H1 (cell line): ENCODE measurements at regions of chr15 and their contacts with region 1.

Region 1: GRCh38 chr15:79130535-79131130 is 40.1 kb upstream of the RASGRF1 start:
- DNase-seq: no peak
- H3K4me3 ChIP-seq: no peak overlapping the region
- H3K27ac ChIP-seq: no peak overlapping the region
- H3K4me1 ChIP-seq: peaks cover 0 to 5% (median 2%) of the 10 kb centered on the region in 4 experiments; a peak in 4 of 7 replicates
- H3K27me3 ChIP-seq: no peaks in the 10 kb centered on the region
- CTCF ChIP-seq: peak; percentile 2 to 68 (median 64)
- EP300 ChIP-seq: no peak
- POLR2A ChIP-seq: no peak
- RAD21 ChIP-seq: peak; percentile 42 to 63

Region 2: GRCh38 chr15:79101866-79102578 is 28.6 kb before region 1 on chr15:
- CTCF ChIA-PET with region 1: interaction called, 20 read pairs
- POLR2A ChIA-PET with region 1: no interaction called
- DNase-seq: peak in 1 of 2 experiments; percentile 11
- H3K4me3 ChIP-seq: no peak overlapping the region
- H3K27ac ChIP-seq: no peak overlapping the region
- H3K4me1 ChIP-seq: no peaks in the 10 kb centered on the region
- H3K27me3 ChIP-seq: peaks cover 0 to 9% (median 4%) of the 10 kb centered on the region in 4 experiments; a peak in 4 of 7 replicates
- CTCF ChIP-seq: no peak; a peak in 1 of 4 replicates
- EP300 ChIP-seq: no peak
- POLR2A ChIP-seq: no peak
- RAD21 ChIP-seq: peak in 1 of 2 experiments; percentile 27; a peak in 1 of 4 replicates

Region 3: DNA sequence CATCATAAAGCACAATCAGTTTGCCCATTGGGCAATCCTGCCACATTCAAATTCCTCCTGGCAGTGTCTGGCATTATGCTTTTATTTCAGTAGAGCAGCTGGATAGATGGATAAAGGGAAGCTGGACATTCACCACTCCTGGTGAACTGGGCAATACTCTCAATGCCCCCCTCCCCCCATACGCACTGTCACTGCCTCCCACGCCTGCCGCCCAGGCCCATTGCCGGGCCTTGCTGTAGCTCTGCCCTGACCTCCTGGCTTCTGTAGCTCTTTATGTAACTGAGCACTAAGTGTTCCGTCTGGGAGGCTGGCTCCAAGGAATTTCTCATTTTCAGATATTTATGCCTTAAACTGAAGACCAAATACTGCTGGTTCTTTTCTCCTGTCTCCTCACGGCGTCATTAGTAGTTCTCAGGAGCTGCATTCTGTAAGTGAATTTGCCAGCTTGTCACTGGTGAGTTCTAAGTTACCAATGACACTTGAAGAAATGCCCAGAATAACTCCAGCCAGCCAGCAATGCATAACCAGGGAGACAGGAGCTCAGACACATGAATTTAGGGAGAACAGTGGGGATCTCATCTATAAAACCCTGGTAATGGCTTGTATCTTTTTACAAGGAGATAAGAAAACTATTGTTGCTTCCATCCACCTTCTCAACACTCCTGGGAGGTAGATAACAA is 14.5 kb before region 1 on chr15:
- CTCF ChIA-PET with region 1: interaction called, 25 read pairs
- POLR2A ChIA-PET with region 1: interaction called, 3 read pairs
- DNase-seq: peak in 1 of 2 experiments; percentile 17
- H3K4me3 ChIP-seq: no peak overlapping the region
- H3K27ac ChIP-seq: no peak overlapping the region
- H3K4me1 ChIP-seq: no peaks in the 10 kb centered on the region
- H3K27me3 ChIP-seq: no peaks in the 10 kb centered on the region; a peak in 1 of 7 replicates
- CTCF ChIP-seq: no peak
- EP300 ChIP-seq: no peak
- POLR2A ChIP-seq: no peak
- RAD21 ChIP-seq: no peak

Region 4: DNA sequence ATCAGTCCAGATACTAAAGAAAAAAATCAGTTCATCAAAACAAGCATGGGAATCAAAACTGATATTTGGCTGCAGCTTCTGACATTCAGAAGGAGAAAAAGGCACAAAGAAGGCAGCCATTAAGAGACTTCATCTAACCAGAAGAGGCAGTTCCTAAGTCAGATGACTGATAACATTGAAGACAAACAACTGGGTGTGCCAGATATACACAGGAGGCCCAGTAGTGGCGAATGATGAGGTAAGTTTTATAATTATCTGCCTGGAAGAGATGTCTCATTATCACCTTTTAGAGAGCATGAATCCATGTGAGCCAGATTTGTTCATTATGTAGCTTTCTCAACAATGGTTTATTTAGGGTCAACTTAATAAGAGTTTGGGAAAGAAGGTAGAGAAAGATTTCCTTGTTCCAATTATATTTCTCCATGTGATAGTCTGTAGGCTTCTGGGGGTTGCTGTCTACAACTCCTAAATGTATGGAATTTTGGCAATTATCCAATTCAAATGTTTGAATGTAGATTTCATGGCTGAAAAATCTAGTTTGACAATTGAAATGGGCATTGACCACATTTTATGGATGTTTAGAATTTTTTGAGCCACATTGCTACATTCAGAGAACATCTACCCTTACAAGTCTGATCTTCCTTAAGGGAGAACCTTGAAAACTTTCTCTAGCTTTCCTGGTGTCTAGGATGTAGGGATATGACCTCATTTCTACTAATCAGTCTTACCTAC is 10.4 kb after region 1 on chr15:
- CTCF ChIA-PET with region 1: interaction called, 17 read pairs
- POLR2A ChIA-PET with region 1: no interaction called
- DNase-seq: no peak
- H3K4me3 ChIP-seq: no peak overlapping the region
- H3K27ac ChIP-seq: no peak overlapping the region
- H3K4me1 ChIP-seq: peaks cover 5 to 13% (median 7%) of the 10 kb centered on the region in 4 experiments; a peak in 6 of 7 replicates
- H3K27me3 ChIP-seq: no peaks in the 10 kb centered on the region
- CTCF ChIP-seq: no peak
- EP300 ChIP-seq: no peak
- POLR2A ChIP-seq: no peak
- RAD21 ChIP-seq: no peak

Region 5: GRCh38 chr15:79154483-79155135 is 24.0 kb after region 1 on chr15:
- CTCF ChIA-PET with region 1: interaction called, 36 read pairs
- POLR2A ChIA-PET with region 1: no interaction called
- DNase-seq: no peak
- H3K4me3 ChIP-seq: no peak overlapping the region
- H3K27ac ChIP-seq: no peak overlapping the region
- H3K4me1 ChIP-seq: peaks cover 0 to 8% (median 2%) of the 10 kb centered on the region in 4 experiments; a peak in 1 of 7 replicates
- H3K27me3 ChIP-seq: peaks cover 0 to 3% (median 1%) of the 10 kb centered on the region in 4 experiments; a peak in 2 of 7 replicates
- CTCF ChIP-seq: no peak
- EP300 ChIP-seq: no peak
- POLR2A ChIP-seq: no peak
- RAD21 ChIP-seq: no peak

Region 6: GRCh38 chr15:79168922-79169456 is 38.4 kb after region 1 on chr15:
- CTCF ChIA-PET with region 1: interaction called, 27 read pairs
- POLR2A ChIA-PET with region 1: no interaction called
- DNase-seq: peak in 1 of 2 experiments; percentile 58
- H3K4me3 ChIP-seq: no peak overlapping the region
- H3K27ac ChIP-seq: no peak overlapping the region
- H3K4me1 ChIP-seq: peaks cover 2 to 14% (median 6%) of the 10 kb centered on the region in 4 experiments; a peak in 5 of 7 replicates
- H3K27me3 ChIP-seq: no peaks in the 10 kb centered on the region; a peak in 1 of 7 replicates
- CTCF ChIP-seq: peak; percentile 39 to 68 (median 60)
- EP300 ChIP-seq: no peak
- POLR2A ChIP-seq: no peak
- RAD21 ChIP-seq: peak; percentile 59 to 63